Endothelial cell of umbilical vein (primary cell): ENCODE measurements at regions of chr15 and their contacts with region 1.

Region 1: DNA sequence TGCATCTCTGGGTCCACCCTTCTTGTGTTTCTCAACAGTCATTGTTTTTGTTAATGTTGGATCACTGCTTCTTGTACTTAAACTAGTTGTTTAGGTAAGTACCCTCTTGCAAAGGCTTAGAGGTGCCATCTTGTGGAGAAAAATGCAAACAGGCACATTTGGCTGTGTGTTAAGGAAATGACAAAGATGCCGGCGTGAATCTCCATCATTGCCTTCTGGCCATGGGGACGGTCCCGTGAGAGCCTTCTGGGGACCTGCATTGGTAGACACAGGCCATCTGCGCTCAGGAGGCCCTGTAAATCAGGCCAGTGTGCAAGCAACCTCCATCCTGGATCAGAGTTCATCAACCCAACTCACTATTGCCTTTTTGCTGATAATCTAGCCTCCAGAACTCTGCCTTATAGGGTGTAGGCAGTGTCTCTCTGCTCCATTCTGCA is 158.6 kb upstream of the NR2E3 start:
- DNase-seq: peak; percentile 64
- H3K4me3 ChIP-seq: no peak overlapping the region
- H3K27ac ChIP-seq: no peak overlapping the region
- H3K4me1 ChIP-seq: peaks cover 15% of the 10 kb centered on the region
- H3K27me3 ChIP-seq: peaks cover 0 to 2% of the 10 kb centered on the region in 2 experiments
- CTCF ChIP-seq: peak; percentile 38 to 43
- POLR2A ChIP-seq: no peak

Region 2: GRCh38 chr15:70974004-70974832 is 677.5 kb before region 1 on chr15:
- CTCF ChIA-PET with region 1: no interaction called
- POLR2A ChIA-PET with region 1: no interaction called
- dilution Hi-C with region 1: no loop called
- intact Hi-C with region 1: loop called (anchors 2 kb)
- DNase-seq: peak; percentile 66
- H3K4me3 ChIP-seq: no peak overlapping the region
- H3K27ac ChIP-seq: no peak overlapping the region
- H3K4me1 ChIP-seq: no peaks in the 10 kb centered on the region
- H3K27me3 ChIP-seq: no peaks in the 10 kb centered on the region
- CTCF ChIP-seq: peak in 1 of 2 donors; percentile 38
- POLR2A ChIP-seq: no peak

Region 3: GRCh38 chr15:71278989-71279756 is 372.6 kb before region 1 on chr15:
- CTCF ChIA-PET with region 1: no interaction called
- POLR2A ChIA-PET with region 1: no interaction called
- dilution Hi-C with region 1: no loop called
- intact Hi-C with region 1: no loop called
- DNase-seq: peak; percentile 93
- H3K4me3 ChIP-seq: no peak overlapping the region
- H3K27ac ChIP-seq: peak overlapping the region; percentile 54
- H3K4me1 ChIP-seq: peaks cover 44% of the 10 kb centered on the region
- H3K27me3 ChIP-seq: no peaks in the 10 kb centered on the region
- CTCF ChIP-seq: no peak
- POLR2A ChIP-seq: no peak

Region 4: DNA sequence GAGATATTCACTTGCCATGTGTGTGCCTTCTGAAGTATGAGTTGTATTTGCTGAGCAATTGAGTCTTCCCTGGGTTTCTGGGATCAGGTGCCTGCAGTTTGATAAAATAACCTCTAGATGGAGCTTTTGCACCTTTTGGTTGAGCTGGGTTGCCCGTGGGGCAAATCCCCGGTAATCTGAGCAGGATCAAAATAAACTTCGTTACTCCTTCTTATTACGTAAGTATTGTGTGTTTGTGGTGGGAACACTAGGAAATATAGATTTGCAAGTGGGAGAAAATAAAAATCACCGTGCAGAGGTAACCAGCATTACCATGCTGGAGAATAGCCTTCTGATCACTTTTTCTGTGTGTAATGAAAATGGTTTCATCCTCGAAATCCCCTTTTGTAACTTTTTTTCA is 118.8 kb before region 1 on chr15:
- CTCF ChIA-PET with region 1: interaction called, 4 read pairs
- POLR2A ChIA-PET with region 1: no interaction called
- dilution Hi-C with region 1: no loop called
- intact Hi-C with region 1: loop called (anchors 1 kb)
- DNase-seq: no peak
- H3K4me3 ChIP-seq: no peak overlapping the region
- H3K27ac ChIP-seq: no peak overlapping the region
- H3K4me1 ChIP-seq: no peaks in the 10 kb centered on the region
- H3K27me3 ChIP-seq: peaks cover 0 to 2% of the 10 kb centered on the region in 2 experiments
- CTCF ChIP-seq: peak; percentile 37 to 57
- POLR2A ChIP-seq: no peak

Region 5: DNA sequence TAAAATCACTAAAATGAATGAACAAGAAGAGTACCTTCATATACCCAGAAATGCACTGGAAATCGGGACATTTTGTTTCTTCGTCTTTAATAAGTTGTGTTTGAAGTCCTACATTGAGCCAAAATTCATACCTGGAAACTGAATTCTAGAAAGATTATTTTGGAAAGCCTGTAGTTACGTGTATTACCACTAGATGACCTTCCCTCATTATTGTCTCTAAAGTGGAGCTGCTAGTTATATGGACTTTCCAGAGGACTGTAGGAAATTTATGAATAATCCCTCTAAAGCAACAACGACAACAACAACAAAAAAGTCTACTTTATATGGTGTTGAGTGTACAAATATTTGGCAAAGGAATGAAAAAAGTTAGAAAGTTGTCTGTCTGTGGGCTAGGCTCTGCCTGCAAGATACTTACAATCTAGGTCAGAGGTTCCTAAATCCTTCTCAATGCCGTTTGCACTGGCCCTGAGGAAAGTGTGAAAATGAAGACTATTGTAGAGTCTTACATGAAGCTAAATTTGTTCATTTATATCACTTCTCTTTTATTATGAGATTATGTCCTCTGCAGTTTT is 76.2 kb before region 1 on chr15:
- CTCF ChIA-PET with region 1: interaction called, 25 read pairs
- POLR2A ChIA-PET with region 1: no interaction called
- dilution Hi-C with region 1: no loop called
- intact Hi-C with region 1: loop called (anchors 1 kb)
- DNase-seq: peak; percentile 24
- H3K4me3 ChIP-seq: no peak overlapping the region
- H3K27ac ChIP-seq: no peak overlapping the region
- H3K4me1 ChIP-seq: peaks cover 12% of the 10 kb centered on the region
- H3K27me3 ChIP-seq: no peaks in the 10 kb centered on the region
- CTCF ChIP-seq: peak; percentile 25 to 36
- POLR2A ChIP-seq: no peak

Region 6: GRCh38 chr15:72341361-72341760 is 689.6 kb after region 1 on chr15:
- CTCF ChIA-PET with region 1: no interaction called
- POLR2A ChIA-PET with region 1: no interaction called
- dilution Hi-C with region 1: no loop called
- intact Hi-C with region 1: no loop called
- DNase-seq: no peak
- H3K4me3 ChIP-seq: no peak overlapping the region
- H3K27ac ChIP-seq: no peak overlapping the region
- H3K4me1 ChIP-seq: peaks cover 7% of the 10 kb centered on the region
- H3K27me3 ChIP-seq: no peaks in the 10 kb centered on the region
- CTCF ChIP-seq: peak in 1 of 2 donors; percentile 23
- POLR2A ChIP-seq: no peak